ENCODE measurements at regions of chr16 and their contacts with region 1.

Region 1: DNA sequence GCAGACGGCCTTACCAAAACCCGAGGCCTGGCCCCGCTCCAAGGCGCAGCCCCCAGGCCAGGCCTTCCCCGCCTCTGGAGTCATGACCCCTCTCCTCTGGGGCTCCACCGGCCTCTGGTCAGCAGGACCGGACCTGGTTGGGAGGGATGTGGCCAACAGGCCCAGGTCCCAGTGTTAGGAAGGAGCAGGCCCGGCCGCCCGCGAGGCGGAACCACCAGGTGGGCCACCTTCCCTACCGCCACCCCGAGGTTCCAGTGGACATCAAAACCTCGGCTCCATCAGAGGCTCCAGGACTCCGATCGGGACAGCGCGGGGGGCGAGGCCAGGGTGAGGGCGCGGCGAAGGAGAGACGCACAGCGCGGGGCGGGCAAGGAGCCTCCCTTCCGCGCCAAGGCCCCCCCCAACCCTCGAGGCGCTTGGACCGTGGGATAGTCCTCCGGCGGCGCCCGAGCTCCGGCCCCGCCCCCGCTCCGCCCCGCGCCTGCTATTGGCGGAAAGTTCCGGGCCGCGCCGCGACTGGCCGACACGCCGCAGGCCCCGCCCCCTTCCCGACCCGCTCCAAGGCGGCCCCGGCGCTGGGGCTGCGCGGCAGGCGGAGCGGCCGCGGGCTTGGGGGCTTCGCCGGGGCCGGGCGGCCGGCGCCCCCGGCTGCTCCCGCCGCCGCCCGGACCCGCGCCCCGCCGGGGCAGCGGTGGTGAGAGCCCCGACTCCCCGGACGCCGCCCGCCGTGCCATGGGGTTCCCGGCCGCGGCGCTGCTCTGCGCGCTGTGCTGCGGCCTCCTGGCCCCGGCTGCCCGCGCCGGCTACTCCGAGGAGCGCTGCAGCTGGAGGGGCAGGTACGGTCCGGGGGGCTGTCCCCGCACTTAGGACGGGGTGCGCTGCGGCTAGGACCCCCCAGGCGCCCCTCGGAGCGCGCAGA is at the start of gene METRN:
- DNase-seq: peak; percentile 84 to 94 (median 92)
- H3K4me3 ChIP-seq: peak within 1 kb of the TSS; percentile 46
- H3K27ac ChIP-seq: no peak within 1 kb of the TSS
- H3K4me1 ChIP-seq: peaks cover 19% of the 10 kb centered on the region
- H3K27me3 ChIP-seq: no peaks in the 10 kb centered on the region
- CTCF ChIP-seq: no peak
- EP300 ChIP-seq: no peak
- POLR2A ChIP-seq: no peak
- total RNA-seq, gene METRN: 4.0 to 57.1 (median 15.7) TPM

Region 2: GRCh38 chr16:1093284-1094123 is 378.7 kb after region 1 on chr16:
- intact Hi-C with region 1: loop called in 1 of 4 experiments (anchors 5 kb)
- DNase-seq: no peak
- H3K4me3 ChIP-seq: no peak overlapping the region
- H3K27ac ChIP-seq: no peak overlapping the region
- H3K4me1 ChIP-seq: peaks cover 5% of the 10 kb centered on the region
- H3K27me3 ChIP-seq: no peaks in the 10 kb centered on the region
- CTCF ChIP-seq: no peak
- EP300 ChIP-seq: no peak
- POLR2A ChIP-seq: no peak

Measured in ovary (tissue), 10 donors.